Vagina (tissue), 2 donors: ENCODE measurements at regions of chr7 and their contacts with region 1.

Region 1: DNA sequence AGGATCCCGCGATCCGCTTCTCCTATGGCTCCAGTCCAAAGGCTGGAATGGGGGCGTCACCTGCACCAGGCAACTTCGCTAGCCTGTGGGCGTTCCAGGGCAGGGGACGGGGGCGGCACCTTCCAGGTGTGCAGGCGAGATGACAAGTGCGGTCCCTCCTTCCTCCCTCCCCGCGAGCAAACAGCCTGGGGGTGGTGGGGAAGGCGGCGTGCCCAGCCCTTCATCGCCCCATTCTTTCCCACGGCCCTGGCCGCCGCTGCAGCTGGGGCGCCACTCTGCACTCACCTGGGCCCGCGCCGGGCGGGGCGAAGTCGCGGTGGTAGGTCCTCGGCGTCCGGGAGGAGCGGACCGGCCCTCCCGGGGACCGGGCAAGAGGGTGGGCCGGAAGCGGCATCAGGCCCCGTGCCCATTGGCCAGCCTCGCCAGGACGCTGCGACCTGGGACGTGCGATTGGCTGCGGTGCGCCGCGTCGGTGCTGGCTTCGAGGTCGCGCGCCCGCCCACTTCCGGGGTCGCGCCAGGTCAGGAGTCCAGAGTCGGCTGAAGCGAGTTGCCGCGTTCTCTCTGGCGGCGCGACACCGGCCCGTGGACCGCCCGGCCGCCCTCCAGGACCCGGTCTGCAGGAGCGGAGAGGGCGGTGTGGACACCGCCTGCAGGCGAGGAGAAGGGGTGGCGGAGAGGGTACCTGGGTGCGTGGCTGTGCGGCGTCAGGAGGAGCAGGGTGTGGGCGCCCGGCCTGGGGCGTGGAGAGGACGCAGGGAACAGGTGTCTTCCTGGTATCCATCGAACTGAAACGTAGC is at the start of gene TECPR1:
- DNase-seq: peak in 1 of 2 donors; percentile 94
- H3K4me3 ChIP-seq: peak within 1 kb of the TSS; percentile 69 to 88
- H3K27ac ChIP-seq: peak within 1 kb of the TSS; percentile 68
- H3K4me1 ChIP-seq: peaks cover 32% of the 10 kb centered on the region
- H3K27me3 ChIP-seq: no peaks in the 10 kb centered on the region
- CTCF ChIP-seq: no peak
- POLR2A ChIP-seq: peak in 1 of 2 donors; percentile 12
- total RNA-seq, gene TECPR1: 19.6 TPM

Region 2: GRCh38 chr7:98284335-98285036 is 32.4 kb after region 1 on chr7:
- intact Hi-C with region 1: loop called (anchors 5 kb)
- DNase-seq: no peak
- H3K4me3 ChIP-seq: peak overlapping the region; percentile 99
- H3K27ac ChIP-seq: peak overlapping the region; percentile 99
- H3K4me1 ChIP-seq: peaks cover 83% of the 10 kb centered on the region
- H3K27me3 ChIP-seq: no peaks in the 10 kb centered on the region
- CTCF ChIP-seq: no peak
- POLR2A ChIP-seq: no peak

Region 3: GRCh38 chr7:98323597-98324322 is 71.7 kb after region 1 on chr7:
- intact Hi-C with region 1: no loop called
- DNase-seq: no peak
- H3K4me3 ChIP-seq: no peak overlapping the region
- H3K27ac ChIP-seq: no peak overlapping the region
- H3K4me1 ChIP-seq: no peaks in the 10 kb centered on the region
- H3K27me3 ChIP-seq: no peaks in the 10 kb centered on the region
- CTCF ChIP-seq: no peak
- POLR2A ChIP-seq: no peak